Heart left ventricle (tissue), 16 donors: ENCODE measurements at regions of chr4 and their contacts with region 1.

Region 1: GRCh38 chr4:155809835-155810234 is 51.0 kb downstream of the GUCY1B1 start:
- DNase-seq: no peak
- ATAC-seq: peak in 3 of 4 donors; percentile 50 to 86 (median 54)
- H3K4me3 ChIP-seq: no peak overlapping the region
- H3K27ac ChIP-seq: no peak overlapping the region
- H3K4me1 ChIP-seq: no peaks in the 10 kb centered on the region
- H3K27me3 ChIP-seq: no peaks in the 10 kb centered on the region
- CTCF ChIP-seq: peak; percentile 56 to 85 (median 72)
- POLR2A ChIP-seq: no peak

Region 2: GRCh38 chr4:155935389-155935986 is 125.7 kb after region 1 on chr4:
- intact Hi-C with region 1: loop called in 1 of 10 experiments (anchors 5 kb)
- DNase-seq: no peak
- ATAC-seq: no peak
- H3K4me3 ChIP-seq: no peak overlapping the region
- H3K27ac ChIP-seq: no peak overlapping the region
- H3K4me1 ChIP-seq: no peaks in the 10 kb centered on the region
- H3K27me3 ChIP-seq: no peaks in the 10 kb centered on the region
- CTCF ChIP-seq: no peak
- POLR2A ChIP-seq: no peak

Region 3: DNA sequence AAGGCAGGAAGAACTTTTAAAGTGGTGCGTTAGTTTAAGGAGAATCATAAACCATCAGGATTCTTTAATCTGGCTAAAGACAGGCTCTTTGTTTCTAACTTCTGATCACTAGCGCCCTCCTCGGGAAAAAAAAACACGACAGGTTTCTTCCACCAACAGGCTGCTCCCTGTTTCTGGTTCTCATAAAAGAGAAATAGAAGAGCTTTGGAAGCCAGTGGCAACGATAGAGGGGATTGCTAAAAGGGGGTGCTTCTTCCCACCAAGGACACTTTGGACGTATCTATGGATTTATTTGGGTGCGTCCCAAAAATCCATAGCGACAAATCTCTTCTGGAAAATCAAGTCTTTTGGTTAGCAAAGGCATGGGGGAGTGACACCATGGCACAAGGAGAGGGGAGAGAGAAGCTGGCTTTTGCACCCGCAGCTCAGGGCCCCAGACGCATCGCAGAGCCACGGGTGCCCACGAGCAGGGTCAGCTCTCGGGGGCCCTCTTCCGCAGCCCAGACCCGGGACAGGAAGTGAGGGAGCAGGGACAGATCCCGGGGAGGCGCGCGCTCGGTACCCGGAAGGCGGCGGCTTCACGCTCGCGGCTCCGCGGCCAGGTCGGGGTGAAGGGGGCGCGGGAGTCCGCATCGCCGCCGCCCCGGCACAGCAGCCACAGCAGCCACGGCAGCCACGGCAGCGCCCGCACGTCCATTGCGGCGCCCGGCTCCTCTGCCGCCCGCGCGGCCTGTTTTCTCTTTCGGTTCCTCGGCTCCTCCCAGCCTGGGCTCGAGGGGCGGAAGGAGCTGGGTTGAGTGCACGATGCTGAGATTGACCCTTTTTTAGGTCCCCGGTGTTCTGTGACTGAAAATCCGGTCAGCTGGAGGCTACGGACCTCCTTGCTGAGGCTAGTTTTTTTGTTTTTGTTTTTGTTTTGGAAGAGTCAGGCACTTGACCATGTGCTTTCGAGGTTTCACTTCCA is 143.6 kb after region 1 on chr4 and contains the start of gene CTSO:
- intact Hi-C with region 1: loop called (anchors 1 to 5 kb)
- DNase-seq: peak; percentile 73 to 88 (median 85)
- ATAC-seq: peak; percentile 82 to 98 (median 96)
- H3K4me3 ChIP-seq: peak within 1 kb of the TSS; percentile 62 to 95 (median 82)
- H3K27ac ChIP-seq: peak within 1 kb of the TSS; percentile 90 to 99 (median 98)
- H3K4me1 ChIP-seq: peaks cover 0 to 17% (median 2%) of the 10 kb centered on the region in 12 donors
- H3K27me3 ChIP-seq: no peaks in the 10 kb centered on the region
- CTCF ChIP-seq: peak; percentile 35 to 75 (median 64)
- POLR2A ChIP-seq: peak in 1 of 2 donors; percentile 54
- total RNA-seq, gene CTSO: 3.9 to 26.0 (median 9.6) TPM

Region 4: GRCh38 chr4:156182269-156182668 is 372.4 kb after region 1 on chr4:
- intact Hi-C with region 1: loop called in 1 of 10 experiments (anchors 10 kb)
- DNase-seq: no peak
- ATAC-seq: no peak
- H3K4me3 ChIP-seq: no peak overlapping the region
- H3K27ac ChIP-seq: no peak overlapping the region
- H3K4me1 ChIP-seq: no peaks in the 10 kb centered on the region
- H3K27me3 ChIP-seq: no peaks in the 10 kb centered on the region
- CTCF ChIP-seq: no peak
- POLR2A ChIP-seq: no peak